ENCODE measurements at regions of chr3 and their contacts with region 1.

Region 1: GRCh38 chr3:138186803-138187295 is 252 bp upstream of the ARMC8 start:
- DNase-seq: no peak
- ATAC-seq: peak; percentile 84
- H3K4me3 ChIP-seq: peak overlapping the region; percentile 89 to 95
- H3K27ac ChIP-seq: peak overlapping the region; percentile 71
- H3K4me1 ChIP-seq: peaks cover 9 to 29% of the 10 kb centered on the region in 2 experiments; a peak in 3 of 4 replicates
- H3K27me3 ChIP-seq: no peaks in the 10 kb centered on the region
- CTCF ChIP-seq: no peak
- POLR2A ChIP-seq: no peak
- RAD21 ChIP-seq: no peak

Region 2: DNA sequence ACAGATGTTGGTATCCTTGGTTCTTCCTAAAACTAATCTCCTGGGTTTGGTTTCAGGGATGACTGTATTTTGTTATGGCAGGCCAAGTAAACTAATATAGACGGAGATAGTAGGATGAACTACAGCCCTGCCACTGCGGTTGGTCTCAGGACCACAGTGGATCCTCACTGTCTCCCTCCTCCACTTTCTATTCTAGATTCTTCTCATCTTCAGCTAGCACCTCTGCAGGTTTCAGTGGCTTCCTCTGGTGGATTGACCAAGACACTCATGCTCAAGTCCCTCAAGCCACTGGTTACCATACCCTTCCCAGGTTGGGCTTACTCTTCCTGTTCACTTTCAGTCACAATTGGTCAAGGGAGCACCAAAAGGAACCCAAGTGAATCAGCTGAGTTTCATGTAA is 248.0 kb before region 1 on chr3:
- CTCF ChIA-PET with region 1: no interaction called
- POLR2A ChIA-PET with region 1: no interaction called
- RAD21 ChIA-PET with region 1: no interaction called
- intact Hi-C with region 1: no loop called
- DNase-seq: no peak
- ATAC-seq: no peak
- H3K4me3 ChIP-seq: no peak overlapping the region
- H3K27ac ChIP-seq: no peak overlapping the region
- H3K4me1 ChIP-seq: no peaks in the 10 kb centered on the region
- H3K27me3 ChIP-seq: peaks cover 17% of the 10 kb centered on the region
- CTCF ChIP-seq: no peak
- POLR2A ChIP-seq: no peak
- RAD21 ChIP-seq: no peak

Region 3: GRCh38 chr3:138174421-138175122 is 12.3 kb before region 1 on chr3 and contains the start of gene DBR1:
- CTCF ChIA-PET with region 1: no interaction called
- POLR2A ChIA-PET with region 1: interaction called, 17 read pairs
- RAD21 ChIA-PET with region 1: no interaction called
- intact Hi-C with region 1: no loop called
- DNase-seq: peak; percentile 78
- ATAC-seq: peak; percentile 93
- H3K4me3 ChIP-seq: peak within 1 kb of the TSS; percentile 47 to 81
- H3K27ac ChIP-seq: peak within 1 kb of the TSS; percentile 79
- H3K4me1 ChIP-seq: peaks cover 8 to 14% of the 10 kb centered on the region in 2 experiments; a peak in 3 of 4 replicates
- H3K27me3 ChIP-seq: no peaks in the 10 kb centered on the region
- CTCF ChIP-seq: no peak
- POLR2A ChIP-seq: peak; percentile 95
- RAD21 ChIP-seq: no peak
- total RNA-seq, gene DBR1: 21.6 TPM

Region 4: DNA sequence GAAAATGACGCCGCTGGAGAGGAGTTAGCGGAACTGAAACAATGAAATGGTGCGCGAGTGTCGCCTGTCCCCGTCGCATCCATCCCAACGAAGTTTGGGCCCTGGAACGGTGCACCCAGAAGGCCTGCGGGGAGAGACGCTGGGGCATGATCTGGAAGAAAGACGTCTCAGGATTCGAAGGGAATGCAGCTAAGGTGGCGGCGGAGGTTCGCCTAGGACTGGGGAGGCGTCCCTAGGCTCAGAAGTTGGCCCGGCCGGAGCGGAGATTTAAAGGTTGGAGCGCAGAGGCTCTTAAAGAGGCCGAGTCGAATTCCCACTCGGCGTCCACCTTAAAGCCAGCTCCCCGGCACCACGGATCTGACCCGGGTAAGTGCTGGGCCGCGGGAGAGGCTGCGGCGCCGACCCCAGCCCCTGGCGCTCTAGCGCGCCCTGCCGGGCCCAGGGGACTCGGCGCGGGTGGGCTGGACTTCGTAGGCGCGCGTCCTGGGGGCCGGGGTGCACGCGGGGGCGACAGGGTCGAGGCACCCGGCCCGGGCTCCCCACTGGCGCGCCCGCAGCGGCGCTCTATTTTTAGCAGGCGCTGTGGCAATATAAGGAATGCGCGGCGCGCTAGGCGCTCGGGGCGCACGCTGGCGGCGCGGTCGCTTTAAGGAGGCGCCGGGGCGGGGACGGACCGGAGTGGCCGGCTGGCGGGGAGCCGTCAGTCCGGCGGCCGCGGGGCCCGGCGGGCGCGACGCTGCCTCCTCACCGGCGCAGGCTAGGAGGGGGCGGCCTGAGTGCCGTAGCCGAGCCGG is 161.3 kb after region 1 on chr3 and contains the start of gene MRAS:
- CTCF ChIA-PET with region 1: no interaction called
- POLR2A ChIA-PET with region 1: no interaction called
- RAD21 ChIA-PET with region 1: no interaction called
- intact Hi-C with region 1: loop called (anchors 5 kb)
- DNase-seq: peak; percentile 57
- ATAC-seq: peak; percentile 83
- H3K4me3 ChIP-seq: peak within 1 kb of the TSS; percentile 64 to 69
- H3K27ac ChIP-seq: peak within 1 kb of the TSS; percentile 65
- H3K4me1 ChIP-seq: peaks cover 3 to 16% of the 10 kb centered on the region in 2 experiments; a peak in 3 of 4 replicates
- H3K27me3 ChIP-seq: no peaks in the 10 kb centered on the region
- CTCF ChIP-seq: peak; percentile 24 to 40 (median 30); a peak in 2 of 6 replicates
- POLR2A ChIP-seq: no peak
- RAD21 ChIP-seq: peak; percentile 40
- total RNA-seq, gene MRAS: 13.5 TPM

Region 5: GRCh38 chr3:138507524-138507923 is 320.7 kb after region 1 on chr3:
- CTCF ChIA-PET with region 1: no interaction called
- POLR2A ChIA-PET with region 1: no interaction called
- RAD21 ChIA-PET with region 1: no interaction called
- intact Hi-C with region 1: no loop called
- DNase-seq: no peak
- ATAC-seq: no peak
- H3K4me3 ChIP-seq: no peak overlapping the region
- H3K27ac ChIP-seq: no peak overlapping the region
- H3K4me1 ChIP-seq: no peaks in the 10 kb centered on the region
- H3K27me3 ChIP-seq: no peaks in the 10 kb centered on the region
- CTCF ChIP-seq: no peak
- POLR2A ChIP-seq: no peak
- RAD21 ChIP-seq: no peak

Region 6: GRCh38 chr3:138694287-138695007 is 507.6 kb after region 1 on chr3:
- CTCF ChIA-PET with region 1: no interaction called
- POLR2A ChIA-PET with region 1: no interaction called
- RAD21 ChIA-PET with region 1: no interaction called
- intact Hi-C with region 1: loop called (anchors 10 kb)
- DNase-seq: peak; percentile 47
- ATAC-seq: peak; percentile 84
- H3K4me3 ChIP-seq: no peak overlapping the region
- H3K27ac ChIP-seq: peak overlapping the region; percentile 44; the same call in 1 of the 2 replicates
- H3K4me1 ChIP-seq: peaks cover 13 to 14% of the 10 kb centered on the region in 2 experiments
- H3K27me3 ChIP-seq: no peaks in the 10 kb centered on the region
- CTCF ChIP-seq: no peak
- POLR2A ChIP-seq: no peak
- RAD21 ChIP-seq: no peak

Region 7: DNA sequence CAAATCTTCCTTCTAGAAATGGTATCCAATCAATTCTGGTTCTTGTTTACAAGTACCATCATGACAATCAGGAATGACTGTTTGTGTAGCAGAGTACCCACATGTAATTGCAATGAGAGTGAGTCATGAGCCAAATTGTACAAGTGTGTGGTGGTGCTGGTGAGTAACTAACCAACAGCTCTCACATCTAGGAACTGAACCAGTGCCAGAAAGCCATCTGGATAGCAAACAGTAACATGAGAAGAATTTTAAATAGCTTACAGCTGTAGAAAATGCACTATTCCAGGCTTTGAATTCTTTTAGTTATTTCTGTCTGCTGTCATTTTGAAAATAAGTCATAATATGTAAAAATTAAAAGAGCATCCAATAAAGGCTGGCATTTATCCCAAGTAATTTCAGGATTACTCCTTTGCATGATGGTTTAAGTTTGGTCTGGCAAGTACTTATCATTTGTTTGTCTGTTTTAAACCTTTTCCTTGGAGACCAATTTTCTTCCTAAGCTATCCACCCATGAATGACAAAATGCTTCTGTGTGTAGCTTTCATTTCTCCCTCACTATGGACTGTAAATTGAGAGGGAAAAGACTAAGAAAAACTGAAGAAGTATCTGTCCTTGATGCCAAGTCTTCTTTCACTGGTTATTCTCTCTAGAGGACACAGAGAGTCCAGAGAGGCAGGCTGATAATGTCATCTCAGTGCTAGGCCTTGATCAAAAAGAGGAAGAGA is 587.8 kb after region 1 on chr3:
- CTCF ChIA-PET with region 1: no interaction called
- POLR2A ChIA-PET with region 1: no interaction called
- RAD21 ChIA-PET with region 1: no interaction called
- intact Hi-C with region 1: no loop called
- DNase-seq: peak; percentile 75
- ATAC-seq: peak; percentile 91
- H3K4me3 ChIP-seq: no peak overlapping the region
- H3K27ac ChIP-seq: peak overlapping the region; percentile 33; the same call in 1 of the 2 replicates
- H3K4me1 ChIP-seq: peaks cover 16 to 35% of the 10 kb centered on the region in 2 experiments
- H3K27me3 ChIP-seq: no peaks in the 10 kb centered on the region
- CTCF ChIP-seq: no peak
- POLR2A ChIP-seq: no peak
- RAD21 ChIP-seq: no peak

Measured in HCT116 (cell line).